ENCODE measurements at regions of chr12 and their contacts with region 1.

Region 1: DNA sequence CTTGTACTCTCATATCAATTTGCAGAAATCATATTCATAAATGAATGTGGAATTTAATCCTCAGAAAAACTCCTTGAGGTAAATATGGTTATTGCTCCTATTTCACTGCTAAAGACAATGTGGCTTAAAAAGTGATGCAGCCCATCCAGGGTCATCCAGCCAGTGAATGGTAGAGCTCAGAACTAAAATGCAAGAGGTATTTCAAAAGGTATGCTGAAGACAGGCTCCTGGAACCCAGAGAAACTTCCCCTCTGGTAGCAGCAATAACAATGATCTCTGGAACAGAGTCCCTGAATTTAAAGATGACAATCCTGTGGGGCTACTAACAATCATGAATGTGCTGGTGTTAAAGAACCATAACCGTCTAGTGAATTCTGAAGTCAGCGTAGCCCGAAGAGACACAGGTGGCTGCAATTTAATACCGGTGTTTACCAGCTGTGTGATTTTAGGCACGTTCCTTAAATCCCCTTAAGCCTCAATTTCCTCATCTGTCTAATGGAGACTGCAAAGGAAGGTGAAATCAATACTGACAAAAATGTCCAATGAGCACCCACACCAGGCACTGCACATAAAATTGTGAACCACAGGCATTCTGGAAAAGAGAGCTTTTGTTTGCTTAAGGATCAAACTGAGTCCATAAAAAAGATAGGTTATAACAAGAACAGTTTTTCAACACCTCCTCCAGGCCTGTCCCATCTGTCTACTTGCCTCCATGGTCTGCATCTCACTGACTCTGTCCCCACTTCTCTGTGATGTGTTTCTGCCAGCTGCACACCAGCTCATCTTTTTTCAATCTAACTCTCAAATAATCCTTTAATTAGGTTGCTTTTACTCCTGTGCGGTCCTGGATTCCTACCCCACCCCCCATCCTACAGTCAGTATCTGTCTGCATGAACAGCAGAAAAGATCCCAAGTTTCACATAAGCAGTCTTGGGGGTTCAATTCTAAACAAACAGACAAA is 10.5 kb downstream of the TM7SF3 start:
- DNase-seq: peak; percentile 62
- H3K4me3 ChIP-seq: peak overlapping the region; percentile 53
- H3K27ac ChIP-seq: peak overlapping the region; percentile 64
- H3K4me1 ChIP-seq: peaks cover 71% of the 10 kb centered on the region
- CTCF ChIP-seq: no peak

Region 2: GRCh38 chr12:26691234-26691970 is 312.3 kb before region 1 on chr12:
- CTCF ChIA-PET with region 1: no interaction called
- POLR2A ChIA-PET with region 1: no interaction called
- intact Hi-C with region 1: no loop called
- DNase-seq: no peak
- H3K4me3 ChIP-seq: no peak overlapping the region
- H3K27ac ChIP-seq: no peak overlapping the region
- H3K4me1 ChIP-seq: no peaks in the 10 kb centered on the region
- CTCF ChIP-seq: no peak

Region 3: DNA sequence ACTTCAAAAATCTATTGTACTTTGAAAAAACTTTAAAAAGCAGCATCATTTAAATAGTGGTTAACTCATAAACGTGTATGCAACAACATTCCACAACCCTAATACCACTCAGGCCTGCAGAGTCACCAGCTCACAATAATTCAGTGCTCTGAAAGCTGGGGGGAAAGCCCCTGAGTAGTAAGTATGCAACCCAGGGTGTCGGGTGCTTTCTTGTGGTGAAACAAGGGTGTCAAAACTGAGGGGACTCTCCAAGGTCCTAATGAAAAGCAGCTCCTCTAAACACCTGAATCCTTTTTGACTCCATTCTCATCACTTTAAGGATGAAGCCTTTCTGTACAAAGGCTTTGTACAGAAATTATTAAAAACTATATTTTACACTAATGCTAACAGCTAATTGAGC is 31.7 kb before region 1 on chr12:
- CTCF ChIA-PET with region 1: no interaction called
- POLR2A ChIA-PET with region 1: interaction called, 18 read pairs
- intact Hi-C with region 1: no loop called
- DNase-seq: peak; percentile 29
- H3K4me3 ChIP-seq: no peak overlapping the region
- H3K27ac ChIP-seq: no peak overlapping the region
- H3K4me1 ChIP-seq: peaks cover 16% of the 10 kb centered on the region
- CTCF ChIP-seq: no peak

Region 4: DNA sequence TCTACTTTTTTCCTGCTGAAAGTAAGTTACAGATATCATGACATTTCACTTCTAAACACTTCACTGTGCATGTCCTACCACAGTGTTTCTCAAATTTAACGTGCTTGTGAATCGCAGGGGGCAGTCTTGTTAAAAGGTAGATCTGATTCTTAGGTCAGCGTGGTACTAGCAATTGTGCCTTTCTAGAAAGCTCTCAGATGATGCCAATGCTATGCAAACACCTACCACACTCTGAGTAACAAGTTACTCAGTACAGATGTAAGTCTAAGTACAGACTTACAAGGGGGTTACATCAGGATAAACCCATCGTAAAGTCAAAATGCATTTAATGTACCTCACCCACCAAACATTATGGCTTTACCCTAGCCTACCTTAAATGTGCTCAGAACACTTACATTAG is 11.9 kb before region 1 on chr12:
- CTCF ChIA-PET with region 1: interaction called, 4 read pairs
- POLR2A ChIA-PET with region 1: interaction called, 13 read pairs
- intact Hi-C with region 1: no loop called
- DNase-seq: no peak
- H3K4me3 ChIP-seq: no peak overlapping the region
- H3K27ac ChIP-seq: no peak overlapping the region
- H3K4me1 ChIP-seq: no peaks in the 10 kb centered on the region
- CTCF ChIP-seq: no peak

Region 5: DNA sequence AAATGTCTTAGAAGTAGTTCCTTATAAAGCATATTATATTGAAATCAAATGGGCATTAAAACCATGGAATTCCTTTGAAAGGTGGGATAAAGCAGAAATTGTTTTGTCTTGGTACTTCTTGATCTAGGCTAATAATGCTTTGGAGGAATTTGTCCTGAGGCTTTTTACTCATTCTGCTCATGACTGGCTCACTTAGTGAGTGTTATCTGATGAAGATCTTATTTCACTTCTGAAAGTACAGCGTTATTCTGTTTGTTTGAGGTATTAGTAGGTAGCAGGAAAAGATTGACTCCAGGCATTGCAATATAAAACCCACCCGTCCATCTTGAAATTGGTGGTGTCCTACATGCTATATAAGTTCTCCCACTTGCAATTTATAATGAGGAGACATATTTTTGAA is 73.2 kb after region 1 on chr12:
- CTCF ChIA-PET with region 1: no interaction called
- POLR2A ChIA-PET with region 1: no interaction called
- intact Hi-C with region 1: no loop called
- DNase-seq: no peak
- H3K4me3 ChIP-seq: no peak overlapping the region
- H3K27ac ChIP-seq: no peak overlapping the region
- H3K4me1 ChIP-seq: no peaks in the 10 kb centered on the region
- CTCF ChIP-seq: no peak